OCI-LY7 (cell line): ENCODE measurements at regions of chr6 and their contacts with region 1.

Region 1: DNA sequence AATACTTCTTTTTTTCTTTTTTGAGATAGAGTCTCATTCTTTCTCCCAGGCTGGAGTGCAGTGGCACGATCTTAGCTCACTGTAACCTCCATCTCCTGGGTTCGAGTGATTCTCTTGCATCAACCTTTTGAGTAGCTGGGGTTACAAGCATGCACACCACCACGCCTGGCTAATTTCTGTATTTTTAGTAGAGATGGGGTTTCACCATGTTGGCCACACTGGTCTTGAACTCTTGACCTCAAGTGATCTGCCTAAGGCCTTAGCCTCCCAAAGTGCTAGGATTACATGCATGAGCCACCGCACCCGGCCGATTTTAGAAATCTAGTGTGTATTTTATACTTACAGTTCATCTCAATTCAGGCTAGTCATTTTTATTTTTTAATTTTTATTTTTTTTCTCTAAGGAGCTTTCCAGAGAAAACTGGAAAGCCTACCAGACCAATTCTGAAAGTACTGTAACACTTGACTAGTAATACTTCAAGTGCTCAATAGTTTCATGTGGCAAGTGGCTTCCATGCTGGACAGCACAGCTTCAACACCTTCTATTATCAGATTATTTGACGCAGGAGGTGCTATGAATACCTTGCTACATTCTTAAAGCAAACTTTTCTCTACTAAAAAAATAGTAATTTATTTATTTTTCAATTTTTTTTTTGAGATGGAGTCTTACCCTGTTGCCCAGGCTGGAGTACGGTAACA is 25.0 kb downstream of the POLR1C start:
- DNase-seq: no peak
- H3K4me3 ChIP-seq: no peak overlapping the region
- H3K27ac ChIP-seq: no peak overlapping the region
- H3K4me1 ChIP-seq: no peaks in the 10 kb centered on the region
- CTCF ChIP-seq: no peak

Region 2: GRCh38 chr6:43608310-43608763 is 66.4 kb after region 1 on chr6:
- CTCF ChIA-PET with region 1: no interaction called
- POLR2A ChIA-PET with region 1: no interaction called
- intact Hi-C with region 1: loop called (anchors 10 kb)
- DNase-seq: peak; percentile 62
- H3K4me3 ChIP-seq: no peak overlapping the region
- H3K27ac ChIP-seq: no peak overlapping the region
- H3K4me1 ChIP-seq: peaks cover 11% of the 10 kb centered on the region
- CTCF ChIP-seq: peak; percentile 94